ENCODE measurements at regions of chr1 and their contacts with region 1.

Region 1: DNA sequence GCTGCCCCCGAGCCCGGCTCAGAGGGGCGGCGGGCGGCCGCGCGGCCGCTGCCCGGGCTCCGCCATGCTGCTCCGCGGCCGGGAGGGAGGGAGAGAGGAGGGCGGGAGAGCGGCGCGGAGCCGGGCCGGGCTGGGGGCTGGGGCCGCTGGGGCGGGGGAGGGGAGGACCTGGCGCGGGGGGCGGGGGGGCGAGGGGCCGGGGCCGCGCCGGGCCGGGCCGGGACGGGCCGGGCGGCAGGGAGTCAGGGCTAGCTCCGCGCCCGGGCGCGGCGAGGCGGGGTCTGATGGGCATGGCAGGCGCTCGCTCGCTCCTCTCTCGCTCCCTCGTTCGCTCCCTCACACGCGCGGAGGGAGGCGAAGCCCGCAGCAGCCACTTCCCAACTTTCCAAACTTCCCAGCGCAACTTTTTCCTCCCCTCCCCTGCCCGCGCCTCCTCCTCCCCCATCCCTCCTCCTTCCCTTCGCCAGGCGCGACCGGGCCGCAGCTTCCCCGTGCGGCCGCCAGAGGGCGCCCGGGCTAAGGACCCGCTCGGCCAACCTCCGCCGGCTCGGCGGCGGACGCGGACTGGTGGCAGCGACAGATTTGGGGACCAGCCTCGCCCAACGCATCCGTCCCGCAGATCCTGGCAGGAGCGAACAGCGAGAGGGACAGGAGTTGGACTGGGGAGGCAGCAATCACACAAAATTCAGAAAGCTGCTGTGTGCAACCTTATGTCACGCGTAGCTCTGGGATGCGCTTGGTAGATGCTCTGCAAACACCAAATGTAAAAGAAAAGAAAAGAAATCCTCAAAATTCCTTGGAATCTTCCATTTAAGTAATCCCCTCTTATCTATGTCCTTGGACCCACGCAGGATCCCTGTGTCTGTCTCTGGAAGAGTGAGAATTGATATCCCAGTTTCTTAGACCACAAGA is at the start of gene TRABD2B:
- DNase-seq: peak; percentile 87
- H3K4me3 ChIP-seq: peak within 1 kb of the TSS; percentile 49 to 77 (median 62)
- H3K27ac ChIP-seq: peak within 1 kb of the TSS; percentile 76 to 88 (median 78)
- H3K4me1 ChIP-seq: peaks cover 0 to 17% (median 12%) of the 10 kb centered on the region in 4 donors
- H3K27me3 ChIP-seq: peaks cover 4 to 32% (median 25%) of the 10 kb centered on the region in 3 donors
- CTCF ChIP-seq: peak; percentile 80 to 96 (median 87)
- EP300 ChIP-seq: no peak
- POLR2A ChIP-seq: no peak
- total RNA-seq, gene TRABD2B: 0.66 to 1.4 (median 1.0) TPM

Region 2: DNA sequence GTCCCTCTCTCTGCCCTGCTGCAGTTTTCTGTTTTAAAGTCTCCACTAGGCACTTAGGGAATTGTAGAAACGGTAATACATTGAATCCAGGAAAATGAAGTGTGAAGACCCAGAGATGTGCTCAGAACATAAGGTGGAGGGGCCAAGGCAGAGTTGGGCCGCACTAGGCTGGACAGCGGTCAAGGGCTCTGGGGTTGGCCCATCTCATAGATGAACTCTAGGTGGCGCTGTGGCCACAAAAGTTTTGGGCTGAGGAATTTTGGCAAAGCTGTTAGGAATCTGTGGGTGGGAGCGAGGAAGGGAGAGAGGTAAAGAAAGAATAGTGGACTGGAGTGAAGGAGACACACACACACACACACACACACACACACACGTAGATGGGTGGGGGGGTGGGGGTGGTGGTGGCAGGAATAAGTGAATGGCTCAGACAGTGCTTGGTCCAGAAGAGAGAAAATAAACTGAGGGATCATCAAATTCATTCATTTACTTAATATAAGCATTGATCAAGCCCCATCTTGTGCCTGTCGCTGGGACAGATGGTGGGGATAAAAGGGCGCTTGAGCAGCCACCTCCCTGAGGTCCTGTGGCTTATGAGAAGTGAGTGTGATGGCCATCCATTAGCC is 258.9 kb before region 1 on chr1:
- intact Hi-C with region 1: loop called (anchors 5 kb)
- DNase-seq: no peak
- H3K4me3 ChIP-seq: no peak overlapping the region
- H3K27ac ChIP-seq: no peak overlapping the region
- H3K4me1 ChIP-seq: no peaks in the 10 kb centered on the region
- H3K27me3 ChIP-seq: peaks cover 0 to 18% (median 3%) of the 10 kb centered on the region in 3 donors
- CTCF ChIP-seq: peak; percentile 27 to 75 (median 52)
- EP300 ChIP-seq: no peak
- POLR2A ChIP-seq: no peak

Measured in sigmoid colon (tissue), 7 donors.